Heart left ventricle (tissue), 16 donors: ENCODE measurements at regions of chr5 and their contacts with region 1.

Region 1: GRCh38 chr5:175689147-175689991 is 31.5 kb downstream of the HRH2 start:
- DNase-seq: peak in 2 of 5 donors; percentile 63 to 91
- ATAC-seq: peak in 3 of 4 donors; percentile 5 to 58 (median 51)
- H3K4me3 ChIP-seq: no peak overlapping the region
- H3K27ac ChIP-seq: peak overlapping the region in 11 of 12 donors; percentile 42 to 88 (median 77)
- H3K4me1 ChIP-seq: peaks cover 0 to 75% (median 47%) of the 10 kb centered on the region in 12 donors
- H3K27me3 ChIP-seq: no peaks in the 10 kb centered on the region
- CTCF ChIP-seq: no peak
- POLR2A ChIP-seq: peak in 1 of 2 donors; percentile 23

Region 2: DNA sequence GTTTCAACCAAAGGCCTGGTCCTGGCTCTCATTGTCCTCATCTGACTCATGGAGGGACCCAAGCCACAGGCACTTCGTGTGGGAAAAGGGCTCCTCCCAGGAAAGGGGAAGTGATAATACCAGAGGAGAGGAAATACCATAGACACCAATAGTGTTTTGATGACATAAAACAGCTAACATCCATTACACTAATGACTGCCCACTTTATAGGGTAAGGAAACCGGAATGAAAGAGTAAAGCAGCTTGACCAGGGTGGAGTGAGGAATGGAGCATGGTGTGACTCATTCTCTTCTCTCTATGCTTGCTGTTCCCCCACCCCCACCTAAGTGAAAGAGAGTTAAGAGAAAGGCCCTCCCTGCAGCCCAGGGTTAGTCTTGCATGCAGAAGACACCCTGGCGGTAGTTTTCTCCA is 98.9 kb before region 1 on chr5:
- intact Hi-C with region 1: loop called in 1 of 10 experiments (anchors 10 kb)
- DNase-seq: no peak
- ATAC-seq: peak in 3 of 4 donors; percentile 44 to 68 (median 51)
- H3K4me3 ChIP-seq: no peak overlapping the region
- H3K27ac ChIP-seq: no peak overlapping the region
- H3K4me1 ChIP-seq: peaks cover 0 to 14% (median 0%) of the 10 kb centered on the region in 12 donors
- H3K27me3 ChIP-seq: no peaks in the 10 kb centered on the region
- CTCF ChIP-seq: no peak
- POLR2A ChIP-seq: no peak